ENCODE measurements at regions of chr2 and their contacts with region 1.

Region 1: DNA sequence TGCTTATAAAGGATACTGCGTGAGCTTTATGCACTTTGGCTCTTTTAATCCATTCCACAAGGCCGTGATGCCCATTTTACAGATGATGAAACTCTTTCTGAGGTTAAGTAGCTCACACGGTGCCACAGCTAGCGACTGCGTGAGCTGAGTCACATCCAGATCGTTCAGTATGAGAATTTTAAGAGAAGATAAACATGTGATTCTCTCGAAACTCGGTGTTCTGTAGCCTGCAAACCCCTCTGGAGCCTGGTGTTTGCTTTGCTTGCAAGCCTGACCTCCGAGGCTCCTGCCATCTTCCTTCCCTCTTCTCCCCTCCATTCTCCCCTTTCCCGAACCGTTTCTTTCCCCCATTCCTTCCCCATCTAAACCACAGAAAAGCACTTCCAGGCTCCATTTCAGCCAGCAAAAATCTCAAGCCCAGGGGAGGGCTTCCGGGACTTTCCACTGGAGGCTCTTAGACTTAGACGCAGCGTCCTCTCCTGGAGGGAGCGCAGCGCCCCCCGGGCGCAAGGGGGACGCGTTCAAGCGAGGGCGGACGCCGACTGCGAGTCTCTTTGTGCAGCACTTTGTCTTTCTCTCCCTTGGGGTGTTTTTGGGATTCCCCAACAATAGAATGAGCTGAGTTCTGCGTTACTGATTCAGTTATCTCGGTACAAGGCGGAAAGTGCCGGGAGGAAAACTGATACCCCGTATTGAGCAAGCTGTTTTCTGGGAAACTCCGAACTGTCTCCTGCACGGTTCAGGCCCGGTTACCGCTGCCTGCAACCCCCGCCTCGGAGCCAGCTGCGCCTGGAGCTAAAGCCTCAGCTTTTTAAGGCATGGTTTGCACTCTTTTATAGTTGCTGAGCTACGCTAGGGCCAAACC is 38.0 kb downstream of the CYP1B1 start:
- DNase-seq: peak in 1 of 2 experiments; percentile 69
- H3K4me3 ChIP-seq: peak overlapping the region; percentile 26 to 53 (median 36); a peak in 6 of 8 replicates
- H3K27ac ChIP-seq: no peak overlapping the region
- H3K4me1 ChIP-seq: peaks cover 0 to 3% (median 3%) of the 10 kb centered on the region in 4 experiments; a peak in 3 of 7 replicates
- H3K27me3 ChIP-seq: peaks cover 0 to 12% (median 5%) of the 10 kb centered on the region in 4 experiments; a peak in 6 of 7 replicates
- CTCF ChIP-seq: peak; percentile 38 to 69 (median 54)
- EP300 ChIP-seq: no peak
- POLR2A ChIP-seq: no peak
- RAD21 ChIP-seq: peak; percentile 52 to 70

Region 2: GRCh38 chr2:37993143-37993542 is 44.8 kb before region 1 on chr2:
- CTCF ChIA-PET with region 1: interaction called, 11 read pairs
- POLR2A ChIA-PET with region 1: no interaction called
- DNase-seq: no peak
- H3K4me3 ChIP-seq: no peak overlapping the region
- H3K27ac ChIP-seq: no peak overlapping the region
- H3K4me1 ChIP-seq: peaks cover 0 to 3% (median 0%) of the 10 kb centered on the region in 4 experiments; a peak in 3 of 7 replicates
- H3K27me3 ChIP-seq: no peaks in the 10 kb centered on the region
- CTCF ChIP-seq: peak in 1 of 3 experiments; percentile 11; a peak in 1 of 4 replicates
- EP300 ChIP-seq: no peak
- POLR2A ChIP-seq: no peak
- RAD21 ChIP-seq: peak in 1 of 2 experiments; percentile 15; a peak in 2 of 4 replicates

Region 3: DNA sequence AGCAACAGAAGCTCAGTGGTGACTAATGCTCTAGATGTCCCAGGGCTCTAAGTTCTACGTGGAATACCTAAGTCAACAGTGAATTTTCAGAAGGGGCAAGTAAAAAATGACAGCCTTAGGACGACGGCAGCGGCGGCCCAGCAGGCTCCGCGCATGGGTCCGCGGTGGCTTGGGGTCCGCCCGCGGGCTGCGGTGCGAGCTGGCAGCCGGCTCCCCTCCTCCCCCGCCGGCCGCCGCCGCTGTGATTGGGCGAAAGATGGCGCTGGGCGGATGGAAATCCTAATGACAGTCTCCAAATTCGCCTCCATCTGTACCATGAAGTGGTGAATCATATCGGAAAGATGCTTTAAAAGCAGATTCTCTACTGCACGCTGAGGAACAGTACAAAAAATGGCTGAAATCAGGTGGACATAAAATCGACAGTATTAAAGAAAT is 490.0 kb after region 1 on chr2:
- CTCF ChIA-PET with region 1: no interaction called
- POLR2A ChIA-PET with region 1: no interaction called
- DNase-seq: peak in 1 of 2 experiments; percentile 79
- H3K4me3 ChIP-seq: peak overlapping the region in 3 of 4 experiments; percentile 9 to 53 (median 11); a peak in 5 of 8 replicates
- H3K27ac ChIP-seq: no peak overlapping the region
- H3K4me1 ChIP-seq: peaks cover under 1 to 8% (median 2%) of the 10 kb centered on the region in 4 experiments; a peak in 6 of 7 replicates
- H3K27me3 ChIP-seq: 0 out of 7 replicates have a peak, but pooled peaks cover 0 to 2% (median 0%) of the 10 kb centered on the region in 4 experiments
- CTCF ChIP-seq: peak in 1 of 3 experiments; percentile 3; a peak in 1 of 4 replicates
- EP300 ChIP-seq: no peak
- POLR2A ChIP-seq: no peak
- RAD21 ChIP-seq: peak in 1 of 2 experiments; percentile 24; a peak in 2 of 4 replicates